ENCODE measurements at regions of chr4 and their contacts with region 1.

Region 1: GRCh38 chr4:93016350-93016749 is 712.6 kb downstream of the GRID2 start:
- DNase-seq: no peak
- H3K4me3 ChIP-seq: no peak overlapping the region
- H3K27ac ChIP-seq: no peak overlapping the region
- H3K4me1 ChIP-seq: no peaks in the 10 kb centered on the region
- H3K27me3 ChIP-seq: no peaks in the 10 kb centered on the region
- CTCF ChIP-seq: no peak

Region 2: DNA sequence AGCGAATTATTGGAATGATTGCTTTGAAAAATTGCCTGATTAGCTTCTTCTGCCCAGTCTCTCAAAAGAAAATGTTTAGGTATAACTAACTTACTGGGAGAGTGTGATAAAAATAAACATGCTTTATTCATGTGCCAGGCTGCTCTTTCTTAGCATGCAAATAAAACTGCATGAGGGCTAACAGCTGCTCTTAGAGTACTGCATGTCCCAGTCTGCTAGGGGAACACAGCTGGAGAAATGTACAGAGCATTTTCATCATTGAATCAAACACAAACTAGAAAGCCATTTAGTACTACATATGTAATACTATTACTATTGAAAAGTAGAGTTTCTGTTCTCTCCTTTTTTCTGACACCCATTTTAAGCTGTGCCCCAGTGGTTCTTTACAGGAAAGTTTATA is 13.4 kb after region 1 on chr4:
- CTCF ChIA-PET with region 1: no interaction called
- POLR2A ChIA-PET with region 1: interaction called, 19 read pairs
- intact Hi-C with region 1: no loop called
- DNase-seq: no peak
- H3K4me3 ChIP-seq: no peak overlapping the region
- H3K27ac ChIP-seq: no peak overlapping the region
- H3K4me1 ChIP-seq: no peaks in the 10 kb centered on the region
- H3K27me3 ChIP-seq: no peaks in the 10 kb centered on the region
- CTCF ChIP-seq: no peak